ENCODE measurements at regions of chr18 and their contacts with region 1.

Region 1: DNA sequence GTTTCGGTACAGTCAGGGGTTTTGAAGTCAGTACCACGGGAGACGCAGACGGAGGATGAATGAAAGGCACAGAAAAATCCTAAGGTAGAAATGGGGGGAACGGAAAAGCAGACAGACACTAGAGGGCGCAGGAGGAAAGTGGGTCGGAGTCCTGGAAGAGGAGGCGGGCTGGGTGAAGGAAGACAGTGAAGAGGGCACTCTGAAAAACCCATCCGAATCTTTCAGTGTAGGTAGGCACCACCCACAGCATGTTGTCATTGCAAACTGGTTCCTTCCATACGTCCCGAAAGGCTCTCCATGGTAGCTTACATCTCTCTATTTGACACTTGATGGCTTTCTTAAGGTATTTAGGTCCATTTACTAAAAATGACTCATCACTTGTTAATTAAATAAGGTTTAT is 18.5 kb upstream of the ZNF236 start:
- DNase-seq: peak; percentile 91
- H3K4me3 Mint-ChIP-seq: peak overlapping the region; percentile 20
- H3K27ac Mint-ChIP-seq: peak overlapping the region; percentile 27
- H3K4me1 Mint-ChIP-seq: peaks cover 7% of the 10 kb centered on the region
- H3K27me3 Mint-ChIP-seq: peaks cover 14% of the 10 kb centered on the region

Region 2: DNA sequence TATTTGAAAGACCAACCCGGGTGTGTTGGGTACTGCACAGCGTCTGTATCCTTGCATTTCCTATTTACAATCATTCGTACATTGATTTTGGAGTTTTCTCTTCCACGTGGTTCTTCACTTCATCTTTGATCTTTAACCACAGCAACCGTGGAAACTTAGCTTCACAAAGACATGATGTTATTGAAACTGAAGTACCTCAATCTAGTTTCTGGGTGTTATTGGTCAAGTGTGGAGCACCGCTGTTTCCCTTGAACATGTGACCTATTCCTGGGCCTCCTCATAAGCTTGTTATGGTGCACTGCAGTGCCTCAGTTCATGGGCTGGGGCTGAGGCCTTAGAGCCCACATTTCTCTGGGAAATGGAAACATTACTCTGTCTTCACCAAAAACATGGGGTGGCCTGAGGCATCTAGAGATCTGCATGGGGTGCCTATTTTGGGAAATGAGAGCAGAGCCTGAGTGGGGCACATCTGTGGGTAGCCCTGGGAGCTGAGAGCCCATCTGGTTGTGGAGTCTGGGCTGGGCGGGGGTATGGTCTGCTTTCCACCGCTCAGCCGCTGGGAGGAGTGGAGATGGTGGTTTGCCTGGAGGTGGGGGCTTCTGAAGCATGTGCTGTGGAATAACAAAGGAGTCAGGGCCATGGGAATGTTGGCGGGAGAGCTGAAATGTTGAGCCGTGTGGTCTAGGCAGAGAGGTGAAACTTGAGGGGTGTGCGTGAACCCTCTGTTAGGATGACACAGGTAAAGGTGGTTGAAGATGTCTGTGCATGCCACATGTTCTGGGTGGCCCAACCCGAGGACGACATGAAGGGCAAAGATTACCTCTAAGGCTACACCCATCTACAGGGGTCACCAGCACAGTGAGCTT is 55.9 kb after region 1 on chr18:
- intact Hi-C with region 1: loop called (anchors 2 kb)
- DNase-seq: peak; percentile 83
- H3K4me3 Mint-ChIP-seq: peak overlapping the region; percentile 71
- H3K27ac Mint-ChIP-seq: peak overlapping the region; percentile 92
- H3K4me1 Mint-ChIP-seq: peaks cover 28% of the 10 kb centered on the region
- H3K27me3 Mint-ChIP-seq: no peaks in the 10 kb centered on the region

Region 3: GRCh38 chr18:76922107-76922506 is 118.3 kb after region 1 on chr18:
- intact Hi-C with region 1: loop called (anchors 1 kb)
- DNase-seq: peak; percentile 88
- H3K4me3 Mint-ChIP-seq: no peak overlapping the region
- H3K27ac Mint-ChIP-seq: peak overlapping the region; percentile 18
- H3K4me1 Mint-ChIP-seq: peaks cover 14% of the 10 kb centered on the region
- H3K27me3 Mint-ChIP-seq: no peaks in the 10 kb centered on the region

Region 4: GRCh38 chr18:77013811-77014521 is 210.2 kb after region 1 on chr18:
- intact Hi-C with region 1: no loop called
- DNase-seq: no peak
- H3K4me3 Mint-ChIP-seq: no peak overlapping the region
- H3K27ac Mint-ChIP-seq: no peak overlapping the region
- H3K4me1 Mint-ChIP-seq: peaks cover 17% of the 10 kb centered on the region
- H3K27me3 Mint-ChIP-seq: no peaks in the 10 kb centered on the region

Region 5: GRCh38 chr18:77054606-77055428 is 251.0 kb after region 1 on chr18:
- intact Hi-C with region 1: loop called (anchors 2 kb)
- DNase-seq: peak; percentile 94
- H3K4me3 Mint-ChIP-seq: peak overlapping the region; percentile 85
- H3K27ac Mint-ChIP-seq: peak overlapping the region; percentile 100
- H3K4me1 Mint-ChIP-seq: peaks cover 52% of the 10 kb centered on the region
- H3K27me3 Mint-ChIP-seq: no peaks in the 10 kb centered on the region

Measured in activated CD4-positive, alpha-beta T cell treated with anti-CD3 and anti-CD28 coated beads, Interleukin-2, amount 10 ng/mL, durations not matched to agents 24 days and 14 days (primary cell).